ENCODE measurements at regions of chr4 and their contacts with region 1.

Region 1: DNA sequence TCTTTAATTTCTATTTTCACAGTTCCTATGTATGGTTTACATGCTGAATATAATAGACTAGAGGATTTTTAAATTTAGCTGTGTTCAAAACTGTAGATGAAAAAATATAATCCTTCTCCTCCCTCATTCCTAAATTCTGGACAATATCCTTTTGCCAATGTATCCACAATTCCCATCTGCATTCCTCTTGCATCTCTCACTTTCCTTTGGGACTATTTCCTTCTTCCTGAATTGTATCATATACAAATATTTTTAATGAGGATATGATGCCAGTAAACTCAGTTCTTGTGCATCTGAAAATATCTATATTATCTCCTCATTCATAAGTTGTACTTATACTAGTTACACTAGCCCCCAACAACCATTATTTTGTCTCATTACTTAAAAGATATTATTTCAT is 46.7 kb downstream of the DDX60L start:
- DNase-seq: no peak
- H3K4me3 ChIP-seq: no peak overlapping the region
- H3K27ac ChIP-seq: no peak overlapping the region
- H3K4me1 ChIP-seq: no peaks in the 10 kb centered on the region
- H3K27me3 ChIP-seq: no peaks in the 10 kb centered on the region
- CTCF ChIP-seq: no peak

Region 2: GRCh38 chr4:168398589-168398988 is 35.0 kb before region 1 on chr4:
- CTCF ChIA-PET with region 1: no interaction called
- POLR2A ChIA-PET with region 1: interaction called, 14 read pairs
- intact Hi-C with region 1: no loop called
- DNase-seq: no peak
- H3K4me3 ChIP-seq: no peak overlapping the region
- H3K27ac ChIP-seq: no peak overlapping the region
- H3K4me1 ChIP-seq: no peaks in the 10 kb centered on the region
- H3K27me3 ChIP-seq: no peaks in the 10 kb centered on the region
- CTCF ChIP-seq: no peak

Region 3: GRCh38 chr4:168758351-168758876 is 324.8 kb after region 1 on chr4:
- CTCF ChIA-PET with region 1: no interaction called
- POLR2A ChIA-PET with region 1: no interaction called
- intact Hi-C with region 1: no loop called
- DNase-seq: no peak
- H3K4me3 ChIP-seq: no peak overlapping the region
- H3K27ac ChIP-seq: no peak overlapping the region
- H3K4me1 ChIP-seq: no peaks in the 10 kb centered on the region
- H3K27me3 ChIP-seq: no peaks in the 10 kb centered on the region
- CTCF ChIP-seq: no peak